ENCODE measurements at regions of chr17 and their contacts with region 1.

Region 1: GRCh38 chr17:63911657-63912426 is 784 bp upstream of the CSHL1 start:
- DNase-seq: peak; percentile 36
- H3K4me3 Mint-ChIP-seq: no peak overlapping the region
- H3K27ac Mint-ChIP-seq: no peak overlapping the region
- H3K4me1 Mint-ChIP-seq: no peaks in the 10 kb centered on the region
- H3K27me3 Mint-ChIP-seq: peaks cover 29% of the 10 kb centered on the region
- CTCF ChIP-seq: peak; percentile 83

Region 2: GRCh38 chr17:63478791-63479494 is 432.9 kb before region 1 on chr17:
- CTCF ChIA-PET with region 1: no interaction called
- POLR2A ChIA-PET with region 1: no interaction called
- intact Hi-C with region 1: no loop called
- DNase-seq: peak; percentile 91
- H3K4me3 Mint-ChIP-seq: no peak overlapping the region
- H3K27ac Mint-ChIP-seq: no peak overlapping the region
- H3K4me1 Mint-ChIP-seq: no peaks in the 10 kb centered on the region
- H3K27me3 Mint-ChIP-seq: no peaks in the 10 kb centered on the region
- CTCF ChIP-seq: peak; percentile 88

Region 3: GRCh38 chr17:63946440-63947367 is 34.9 kb after region 1 on chr17:
- CTCF ChIA-PET with region 1: interaction called, 20 read pairs
- POLR2A ChIA-PET with region 1: no interaction called
- intact Hi-C with region 1: loop called (anchors 5 kb)
- DNase-seq: peak; percentile 35
- H3K4me3 Mint-ChIP-seq: no peak overlapping the region
- H3K27ac Mint-ChIP-seq: no peak overlapping the region
- H3K4me1 Mint-ChIP-seq: no peaks in the 10 kb centered on the region
- H3K27me3 Mint-ChIP-seq: no peaks in the 10 kb centered on the region
- CTCF ChIP-seq: peak; percentile 82

Region 4: DNA sequence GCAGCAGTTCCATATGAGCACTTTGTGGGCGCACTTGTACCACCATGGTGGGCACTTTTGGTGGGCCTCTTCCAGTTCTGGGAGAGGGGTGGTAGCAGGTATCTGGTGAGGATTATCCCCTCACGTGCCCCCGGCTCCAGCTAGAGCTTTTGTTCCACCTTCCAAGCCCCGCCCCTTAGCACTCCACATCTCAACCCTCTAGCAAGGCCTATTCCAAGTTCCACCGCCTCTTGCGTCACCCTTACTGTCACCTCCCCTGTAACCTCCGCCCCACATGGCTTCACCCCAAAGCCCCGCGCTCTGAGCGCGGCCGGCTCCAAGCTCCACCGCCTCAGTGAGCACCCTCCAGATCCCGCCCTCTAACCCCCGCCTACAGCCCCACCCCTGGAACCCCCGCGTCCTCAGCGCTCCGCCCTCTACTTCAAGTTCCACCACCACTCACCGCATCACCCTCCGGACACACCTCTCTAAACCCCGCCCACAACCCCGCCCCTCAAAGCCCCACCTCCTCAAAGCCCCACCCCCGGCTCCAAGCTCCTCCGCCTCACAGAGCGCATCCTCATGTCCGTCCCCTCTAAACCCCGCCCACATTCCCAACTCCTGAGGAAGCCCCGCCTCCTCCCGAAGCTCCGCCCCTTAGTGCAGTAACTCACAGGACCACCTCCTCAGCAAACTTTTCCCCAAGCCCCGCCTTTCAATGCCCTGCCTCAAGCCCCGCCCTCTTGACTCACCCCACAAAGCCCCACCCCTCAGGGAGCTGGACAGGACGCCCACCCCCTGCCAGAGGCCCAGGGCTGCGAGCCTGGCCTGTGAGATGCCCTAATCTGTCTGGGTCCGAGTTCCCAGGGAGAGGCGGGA is 49.7 kb after region 1 on chr17:
- CTCF ChIA-PET with region 1: interaction called, 12 read pairs
- POLR2A ChIA-PET with region 1: no interaction called
- intact Hi-C with region 1: no loop called
- DNase-seq: peak; percentile 40
- H3K4me3 Mint-ChIP-seq: no peak overlapping the region
- H3K27ac Mint-ChIP-seq: no peak overlapping the region
- H3K4me1 Mint-ChIP-seq: no peaks in the 10 kb centered on the region
- H3K27me3 Mint-ChIP-seq: no peaks in the 10 kb centered on the region
- CTCF ChIP-seq: no peak